Head of caudate nucleus (tissue), 42 donors: ENCODE measurements at regions of chr13 and their contacts with region 1.

Region 1: DNA sequence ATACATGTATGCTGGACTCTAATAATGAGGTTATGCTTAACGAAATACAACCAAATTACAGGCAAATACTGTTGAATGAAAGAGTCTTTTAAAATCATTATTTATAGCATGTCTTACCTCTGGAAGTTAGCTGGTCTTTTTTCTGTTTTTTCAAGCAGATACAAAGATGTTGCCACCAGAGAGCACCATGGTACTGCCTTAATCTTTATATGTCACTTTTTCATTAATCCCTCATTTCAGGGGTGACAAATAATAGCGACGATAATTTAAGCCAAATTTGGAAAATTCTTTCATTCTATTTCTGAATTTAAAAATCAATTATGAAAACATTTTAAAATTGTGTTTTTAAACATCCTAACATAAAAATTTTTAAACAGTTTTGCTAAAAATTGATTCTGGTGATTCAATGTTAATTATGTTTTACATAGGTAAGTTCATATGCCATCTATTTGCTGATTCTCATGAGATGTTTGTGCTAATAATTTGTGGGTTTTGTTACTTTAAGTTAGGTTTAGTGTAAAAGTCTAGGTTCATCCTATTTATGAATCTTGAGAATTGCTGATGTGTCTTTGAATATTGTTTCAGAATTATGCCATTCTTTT is 379.3 kb upstream of the SGCG start:
- DNase-seq: peak in 2 of 42 donors; percentile 15 to 22

Region 2: GRCh38 chr13:22278336-22278929 is 523.1 kb before region 1 on chr13:
- intact Hi-C with region 1: no loop called
- DNase-seq: peak; percentile 11 to 82 (median 56)

Region 3: GRCh38 chr13:22883262-22883840 is 81.8 kb after region 1 on chr13:
- intact Hi-C with region 1: no loop called
- DNase-seq: no peak

Region 4: DNA sequence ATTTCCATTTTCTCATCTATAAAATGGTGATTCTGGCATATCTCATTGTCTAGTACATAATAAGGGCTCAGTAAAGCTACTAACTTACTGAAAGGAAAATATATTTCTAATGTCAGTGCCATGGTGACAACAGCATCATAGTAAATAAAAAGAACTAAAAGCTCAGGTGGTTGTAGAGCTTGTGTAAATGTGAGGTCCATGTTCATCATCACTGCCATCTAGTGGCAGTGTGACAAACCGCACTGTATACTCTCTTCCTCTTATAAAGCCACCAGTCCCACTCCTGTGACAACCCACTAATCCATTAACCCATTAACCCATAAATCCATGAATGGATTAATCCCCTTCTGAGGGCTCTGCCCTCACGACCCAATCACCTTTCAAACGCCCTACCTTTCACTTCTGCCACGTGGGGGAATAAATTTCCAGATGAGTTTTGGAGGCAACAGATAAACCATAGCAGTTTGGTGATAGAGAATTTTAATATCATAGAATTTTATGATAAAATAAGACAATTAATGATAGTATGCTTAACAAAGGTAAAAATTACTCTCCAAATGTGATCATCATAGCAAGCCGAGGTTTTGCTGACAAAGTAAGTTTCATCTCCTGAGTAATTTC is 218.8 kb after region 1 on chr13:
- intact Hi-C with region 1: loop called (anchors 10 kb)
- DNase-seq: peak in 39 of 42 donors; percentile 7 to 74 (median 46)